Right cardiac atrium (tissue), 5 donors: ENCODE measurements at regions of chr17 and their contacts with region 1.

Region 1: DNA sequence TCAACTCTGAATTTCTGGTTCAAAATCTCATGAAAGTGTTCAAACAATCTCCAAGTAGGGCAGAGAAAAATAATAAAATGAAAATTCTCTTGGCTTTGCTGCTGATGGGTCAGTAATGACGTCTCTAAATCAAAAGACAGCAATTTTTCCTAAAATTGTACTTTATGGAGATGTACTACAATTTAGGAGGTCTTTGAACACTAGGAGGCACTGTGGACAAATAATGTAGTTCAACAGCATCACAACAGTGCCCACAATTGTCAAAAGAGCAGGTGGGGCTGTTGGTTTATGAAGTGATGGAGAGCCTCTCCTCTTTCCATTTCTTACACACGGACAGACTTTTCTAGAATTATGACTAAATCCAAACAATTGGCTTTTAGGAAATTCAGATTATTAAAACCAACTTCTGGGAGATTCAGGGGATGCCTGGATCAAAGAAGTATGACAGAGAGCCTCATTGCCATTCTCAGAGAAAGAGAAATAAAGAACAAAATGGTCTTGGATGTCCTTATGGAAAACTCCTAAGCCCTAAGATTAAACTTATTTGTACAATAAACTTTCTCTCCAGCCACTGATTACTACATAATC is 23.8 kb downstream of the EZH1 start:
- DNase-seq: no peak
- ATAC-seq: peak; percentile 83 to 90
- H3K4me3 ChIP-seq: no peak overlapping the region
- H3K27ac ChIP-seq: no peak overlapping the region
- H3K4me1 ChIP-seq: no peaks in the 10 kb centered on the region
- H3K27me3 ChIP-seq: no peaks in the 10 kb centered on the region

Region 2: DNA sequence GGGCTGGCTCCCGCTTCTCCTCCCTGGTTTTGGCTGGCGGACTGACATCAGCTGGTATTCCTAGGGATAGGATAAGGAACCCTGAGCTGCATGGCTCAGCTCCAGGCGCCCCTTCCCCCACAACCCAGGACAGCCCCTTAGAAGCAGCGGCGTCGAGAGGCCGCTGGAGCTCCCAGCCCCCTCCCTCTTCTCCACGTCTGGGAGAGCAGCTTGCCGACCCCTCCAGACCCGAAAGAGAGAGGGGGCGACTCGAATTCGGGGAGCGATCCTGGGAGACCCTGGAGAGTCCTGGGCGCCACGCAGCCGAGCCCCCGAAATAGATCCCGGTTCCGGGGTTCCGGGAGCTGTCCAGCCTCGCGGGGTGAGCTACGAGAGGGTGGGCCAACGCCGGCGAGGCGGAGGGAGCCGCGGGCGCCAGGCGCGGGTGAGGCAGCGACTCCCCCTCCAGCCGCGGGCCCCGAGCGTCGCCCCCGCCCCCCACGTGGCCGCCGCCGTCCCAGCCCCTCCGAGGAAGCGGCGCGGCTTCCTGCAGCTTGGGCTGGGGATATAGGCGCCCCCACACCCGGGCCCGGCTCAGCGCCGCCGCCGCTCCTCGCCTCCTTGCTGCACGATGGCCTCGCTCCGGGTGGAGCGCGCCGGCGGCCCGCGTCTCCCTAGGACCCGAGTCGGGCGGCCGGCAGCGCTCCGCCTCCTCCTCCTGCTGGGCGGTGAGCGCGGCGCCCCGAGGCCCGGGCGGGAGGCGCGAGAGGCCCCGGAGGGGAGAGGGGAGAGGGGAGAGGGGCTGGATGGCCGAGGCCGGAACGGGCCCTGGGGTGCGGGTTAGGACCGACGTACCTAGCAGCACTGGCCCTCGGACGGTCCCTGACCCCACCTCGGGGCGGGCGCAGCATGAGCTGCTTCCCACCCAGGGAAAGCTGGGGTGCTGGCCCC is 39.8 kb after region 1 on chr17 and contains the start of gene RAMP2:
- intact Hi-C with region 1: loop called (anchors 5 to 10 kb)
- DNase-seq: peak; percentile 50 to 83 (median 82)
- ATAC-seq: peak; percentile 62 to 69
- H3K4me3 ChIP-seq: peak within 1 kb of the TSS; percentile 58
- H3K27ac ChIP-seq: peak within 1 kb of the TSS; percentile 31
- H3K4me1 ChIP-seq: peaks cover 2% of the 10 kb centered on the region
- H3K27me3 ChIP-seq: no peaks in the 10 kb centered on the region
- total RNA-seq, gene RAMP2: 29.2 to 45.9 (median 40.9) TPM

Region 3: DNA sequence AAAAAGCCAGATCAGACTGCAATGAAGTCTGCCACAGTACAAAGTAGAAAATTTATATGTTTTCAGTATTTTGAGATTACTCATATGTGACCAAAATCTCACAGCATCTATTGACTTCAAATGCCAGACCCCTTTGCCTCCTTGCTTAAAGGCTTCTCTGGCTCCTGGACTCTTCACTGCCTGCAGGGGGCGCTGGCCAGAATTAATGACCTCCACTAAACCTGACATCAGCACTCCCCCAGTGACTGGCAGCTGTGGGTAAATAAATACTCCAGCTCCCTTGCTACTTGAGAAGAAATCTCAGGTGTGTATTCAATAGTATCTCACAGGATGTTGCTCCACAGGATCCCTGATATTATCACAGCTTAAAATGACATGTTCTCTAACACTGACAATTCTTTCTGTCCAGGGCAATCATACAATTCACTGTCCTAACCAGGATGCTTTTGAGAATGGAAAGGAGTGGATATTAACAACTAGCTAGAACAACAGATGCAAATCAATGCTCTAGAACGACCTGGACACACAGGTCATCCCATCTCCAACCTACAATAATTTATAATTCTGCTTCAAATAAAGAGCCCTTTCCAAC is 99.0 kb after region 1 on chr17:
- intact Hi-C with region 1: loop called in 3 of 4 experiments (anchors 10 kb)
- DNase-seq: peak; percentile 57 to 71 (median 69)
- ATAC-seq: no peak
- H3K4me3 ChIP-seq: no peak overlapping the region
- H3K27ac ChIP-seq: no peak overlapping the region
- H3K4me1 ChIP-seq: peaks cover 2% of the 10 kb centered on the region
- H3K27me3 ChIP-seq: no peaks in the 10 kb centered on the region

Region 4: DNA sequence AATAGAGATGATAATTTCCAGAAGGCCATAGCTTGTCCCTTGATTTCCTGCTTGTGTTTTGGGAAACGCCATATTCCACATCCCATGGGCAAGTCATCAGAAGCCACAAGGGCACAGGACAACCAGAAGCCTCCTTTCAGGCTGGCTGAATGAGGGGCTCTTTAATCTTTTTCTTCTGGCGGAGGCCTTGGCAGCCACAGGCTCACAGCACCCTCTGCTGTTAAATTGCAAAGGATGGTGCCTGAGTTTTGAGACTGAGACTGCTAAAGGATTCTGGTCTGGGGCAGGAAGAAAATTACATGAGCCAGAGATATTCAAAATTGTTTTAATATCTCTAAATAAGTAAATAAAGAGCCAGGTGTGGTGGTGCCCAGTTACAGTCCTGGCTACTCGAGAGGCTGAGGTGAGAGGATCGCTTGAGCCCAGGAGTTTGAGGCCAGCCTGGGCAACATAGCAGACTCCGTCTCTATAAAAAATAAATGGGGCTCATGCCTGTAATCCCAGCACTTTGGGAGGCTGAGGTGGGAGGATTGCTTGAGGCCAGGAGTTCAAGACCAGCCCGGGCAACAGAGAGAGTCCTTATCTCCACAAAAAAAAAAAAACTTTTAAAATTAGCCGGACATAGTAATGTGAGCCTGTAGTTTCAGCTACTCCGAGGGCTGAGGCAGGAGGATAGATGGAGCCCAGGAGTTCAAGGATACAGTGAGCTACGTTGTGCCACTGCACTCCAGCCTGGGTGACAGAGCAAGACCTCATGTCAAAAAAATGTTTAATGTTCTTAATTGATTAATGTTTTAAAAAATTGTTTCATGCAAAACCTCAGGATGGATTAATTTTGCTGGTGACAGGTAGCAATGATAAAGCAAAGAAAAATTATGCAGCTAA is 216.9 kb after region 1 on chr17:
- intact Hi-C with region 1: loop called in 1 of 4 experiments (anchors 10 kb)
- DNase-seq: peak in 2 of 3 donors; percentile 28 to 57
- ATAC-seq: peak; percentile 68 to 76
- H3K4me3 ChIP-seq: no peak overlapping the region
- H3K27ac ChIP-seq: no peak overlapping the region
- H3K4me1 ChIP-seq: no peaks in the 10 kb centered on the region
- H3K27me3 ChIP-seq: no peaks in the 10 kb centered on the region